Panc1 (cell line): ENCODE measurements at regions of chr17 and their contacts with region 1.

Region 1: DNA sequence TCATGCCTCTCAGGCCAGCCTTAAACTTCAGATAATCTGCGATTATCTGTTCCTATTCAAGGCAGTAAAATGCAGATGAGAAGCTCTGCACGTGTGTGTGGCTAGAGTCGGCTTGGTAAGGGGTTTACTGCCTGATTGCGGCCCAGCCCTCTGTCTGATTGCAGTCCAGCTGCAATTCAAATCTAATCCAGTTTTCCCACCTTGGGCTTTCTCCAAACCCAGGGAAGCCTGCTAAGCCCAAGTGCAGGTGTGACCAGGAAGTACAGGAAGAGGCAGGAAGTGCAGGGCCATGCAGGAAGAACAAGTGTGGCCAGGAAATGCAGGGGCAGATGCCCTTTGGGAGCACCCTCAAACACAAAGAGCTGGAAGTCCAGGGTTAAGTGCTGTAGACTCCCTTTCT is 314.9 kb downstream of the CEP112 start:
- DNase-seq: no peak
- ATAC-seq: no peak
- H3K4me3 ChIP-seq: no peak overlapping the region
- H3K27ac ChIP-seq: no peak overlapping the region
- H3K4me1 ChIP-seq: no peaks in the 10 kb centered on the region
- H3K27me3 ChIP-seq: no peaks in the 10 kb centered on the region
- CTCF ChIP-seq: no peak

Region 2: DNA sequence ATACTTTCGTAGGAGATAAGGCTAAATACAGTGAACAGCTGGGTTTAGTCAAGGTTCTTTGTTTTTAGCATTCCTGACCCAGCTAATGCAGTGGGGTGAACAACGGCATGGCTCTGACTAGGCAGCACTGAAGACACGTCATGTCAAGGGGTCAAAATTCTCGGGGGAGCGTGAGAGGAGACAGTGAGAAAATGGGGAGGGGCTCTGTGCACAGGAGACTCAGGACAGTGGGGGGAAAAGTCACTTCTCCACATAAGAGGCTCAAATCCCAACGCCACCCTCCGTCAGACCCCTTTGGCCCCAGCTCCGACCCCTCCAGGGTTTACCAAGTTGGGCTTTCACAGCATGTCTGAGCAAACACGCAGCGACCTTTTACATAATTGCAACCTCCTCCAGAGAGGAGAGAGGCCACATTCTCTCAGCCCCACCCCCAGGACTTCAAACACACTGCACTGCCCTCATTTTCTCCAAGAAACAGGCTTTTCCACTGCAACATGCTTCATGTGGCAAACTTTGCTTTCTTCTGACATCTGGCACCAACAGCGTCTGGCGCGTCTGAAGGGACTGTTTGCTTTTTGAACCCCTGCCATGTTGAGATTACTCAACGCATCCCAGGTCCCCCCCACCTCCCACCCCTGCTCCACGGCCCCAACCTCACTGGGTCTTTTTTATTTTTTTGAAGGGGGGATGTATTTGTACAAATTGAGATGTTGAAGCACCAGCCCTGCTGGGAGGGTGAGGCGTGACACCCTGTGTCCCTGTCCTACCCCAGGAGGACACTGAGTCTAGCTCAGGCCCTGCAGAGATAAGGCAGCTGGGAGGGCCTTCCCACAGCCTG is 345.5 kb before region 1 on chr17:
- CTCF ChIA-PET with region 1: no interaction called
- POLR2A ChIA-PET with region 1: interaction called, 11 read pairs
- in situ Hi-C with region 1: no loop called
- intact Hi-C with region 1: no loop called
- DNase-seq: no peak
- ATAC-seq: no peak
- H3K4me3 ChIP-seq: no peak overlapping the region
- H3K27ac ChIP-seq: no peak overlapping the region
- H3K4me1 ChIP-seq: no peaks in the 10 kb centered on the region
- H3K27me3 ChIP-seq: no peaks in the 10 kb centered on the region
- CTCF ChIP-seq: no peak

Region 3: GRCh38 chr17:65888649-65889048 is 11.7 kb after region 1 on chr17:
- CTCF ChIA-PET with region 1: no interaction called
- POLR2A ChIA-PET with region 1: no interaction called
- in situ Hi-C with region 1: no loop called
- intact Hi-C with region 1: no loop called
- DNase-seq: no peak
- ATAC-seq: no peak
- H3K4me3 ChIP-seq: no peak overlapping the region
- H3K27ac ChIP-seq: no peak overlapping the region
- H3K4me1 ChIP-seq: no peaks in the 10 kb centered on the region
- H3K27me3 ChIP-seq: no peaks in the 10 kb centered on the region
- CTCF ChIP-seq: no peak

Region 4: DNA sequence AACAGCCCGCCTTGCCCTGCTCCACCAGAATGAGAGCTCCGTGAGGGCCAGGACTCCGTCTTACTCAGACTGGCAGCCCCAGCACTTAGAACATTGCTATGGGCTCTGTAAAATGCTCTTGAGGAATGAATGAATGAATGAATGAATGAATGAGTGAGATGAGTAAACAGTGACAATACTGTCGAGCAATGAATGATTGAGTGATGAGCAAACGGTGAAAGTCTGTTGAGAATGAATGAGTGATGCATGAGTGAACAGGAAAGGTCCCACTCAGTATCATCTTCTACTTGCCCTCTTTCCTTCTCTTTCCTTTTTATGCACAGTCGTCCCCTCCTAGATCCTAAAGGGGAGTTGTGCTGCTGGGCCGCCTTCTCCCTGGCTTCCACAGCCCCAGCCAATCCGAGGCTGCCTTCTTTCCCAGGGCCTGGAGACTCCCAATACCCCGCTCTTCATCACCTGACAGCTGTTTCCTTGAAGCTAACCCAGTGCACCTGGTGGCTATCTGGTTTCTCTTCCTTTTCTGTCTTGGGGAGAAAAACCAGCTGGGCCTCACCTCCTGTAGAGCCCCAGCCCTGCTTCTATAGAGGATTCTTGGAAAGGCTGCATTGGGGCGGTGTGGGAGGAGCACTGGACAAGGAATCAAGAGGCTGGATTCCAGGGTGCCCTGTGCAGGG is 1134.7 kb after region 1 on chr17:
- CTCF ChIA-PET with region 1: no interaction called
- POLR2A ChIA-PET with region 1: interaction called, 13 read pairs
- in situ Hi-C with region 1: no loop called
- intact Hi-C with region 1: no loop called
- DNase-seq: no peak
- ATAC-seq: no peak
- H3K4me3 ChIP-seq: no peak overlapping the region
- H3K27ac ChIP-seq: no peak overlapping the region
- H3K4me1 ChIP-seq: no peaks in the 10 kb centered on the region
- H3K27me3 ChIP-seq: no peaks in the 10 kb centered on the region
- CTCF ChIP-seq: no peak